GM12878 (cell line): ENCODE measurements at regions of chr3 and their contacts with region 1.

Region 1: GRCh38 chr3:111967651-111968274 is 11.1 kb upstream of the ABHD10 start:
- DNase-seq: no peak
- ATAC-seq: peak; percentile 99
- H3K4me3 ChIP-seq: no peak overlapping the region
- H3K27ac ChIP-seq: no peak overlapping the region
- H3K4me1 ChIP-seq: no peaks in the 10 kb centered on the region
- H3K27me3 ChIP-seq: no peaks in the 10 kb centered on the region
- CTCF ChIP-seq: peak; percentile 78 to 87 (median 85)
- EP300 ChIP-seq: no peak
- POLR2A ChIP-seq: no peak
- RAD21 ChIP-seq: peak; percentile 90

Region 2: GRCh38 chr3:111577794-111578685 is 389.7 kb before region 1 on chr3:
- CTCF ChIA-PET with region 1: interaction called, 10 read pairs
- POLR2A ChIA-PET with region 1: no interaction called
- RAD21 ChIA-PET with region 1: interaction called, 5 read pairs
- SMC1A ChIA-PET with region 1: interaction called, 6 read pairs
- in situ Hi-C with region 1: loop called (anchors 10 kb)
- intact Hi-C with region 1: loop called (anchors 2 kb)
- DNase-seq: peak; percentile 39
- ATAC-seq: peak; percentile 94
- H3K4me3 ChIP-seq: no peak overlapping the region
- H3K27ac ChIP-seq: no peak overlapping the region
- H3K4me1 ChIP-seq: no peaks in the 10 kb centered on the region
- H3K27me3 ChIP-seq: no peaks in the 10 kb centered on the region; a peak in 1 of 4 replicates
- CTCF ChIP-seq: peak; percentile 33 to 58 (median 34); a peak in 5 of 6 replicates
- EP300 ChIP-seq: no peak
- POLR2A ChIP-seq: no peak
- RAD21 ChIP-seq: peak; percentile 58

Region 3: DNA sequence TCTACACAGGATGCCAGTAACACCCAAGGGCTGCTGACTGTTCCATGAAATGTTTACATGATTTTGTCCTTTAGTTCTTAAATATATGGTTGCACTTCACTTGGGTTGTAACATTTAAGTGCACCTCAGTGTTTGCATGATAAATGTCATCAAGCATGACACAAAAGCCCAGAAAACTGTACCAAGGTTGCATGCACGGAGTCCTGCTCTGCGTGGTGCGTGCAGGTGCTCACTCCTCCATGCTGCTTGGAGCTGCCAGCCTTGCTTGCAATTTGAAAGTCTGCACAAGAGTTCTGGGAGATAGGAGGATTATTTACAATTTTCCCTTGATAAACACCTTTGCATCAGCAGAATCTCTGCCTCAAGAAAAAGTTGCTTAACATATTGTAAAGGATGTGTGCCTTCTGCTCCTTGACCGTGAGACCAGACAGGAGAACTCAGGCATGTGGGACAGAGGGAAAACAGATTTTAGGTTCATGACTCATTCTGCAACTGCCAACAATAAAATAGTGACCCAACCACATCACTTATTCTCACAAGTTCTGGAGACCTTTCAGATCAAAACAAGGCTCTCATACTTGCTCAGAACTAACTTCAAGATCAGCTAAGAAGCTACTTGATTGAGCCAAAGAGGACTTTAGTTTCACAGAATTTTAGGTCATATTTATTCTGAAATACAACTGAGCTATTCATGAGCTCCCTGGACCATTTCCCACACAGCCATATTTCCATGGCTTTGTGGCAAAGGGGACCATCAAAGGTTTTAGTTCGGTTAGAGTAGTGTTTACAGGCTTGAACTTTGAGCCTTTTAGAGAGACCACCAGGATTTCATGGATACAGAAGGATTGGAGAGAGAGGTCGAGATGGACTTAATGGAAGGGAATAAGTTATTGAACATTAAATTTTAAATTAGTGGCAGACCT is 244.2 kb before region 1 on chr3:
- CTCF ChIA-PET with region 1: interaction called, 380 read pairs
- POLR2A ChIA-PET with region 1: interaction called, 4 read pairs
- RAD21 ChIA-PET with region 1: interaction called, 177 read pairs
- SMC1A ChIA-PET with region 1: interaction called, 424 read pairs
- in situ Hi-C with region 1: loop called (anchors 5 kb)
- intact Hi-C with region 1: no loop called
- DNase-seq: no peak
- ATAC-seq: peak; percentile 48; the same call in 2 of the 3 replicates
- H3K4me3 ChIP-seq: no peak overlapping the region
- H3K27ac ChIP-seq: no peak overlapping the region
- H3K4me1 ChIP-seq: peaks cover 8% of the 10 kb centered on the region
- H3K27me3 ChIP-seq: no peaks in the 10 kb centered on the region
- CTCF ChIP-seq: no peak
- EP300 ChIP-seq: no peak
- POLR2A ChIP-seq: no peak
- RAD21 ChIP-seq: no peak

Region 4: DNA sequence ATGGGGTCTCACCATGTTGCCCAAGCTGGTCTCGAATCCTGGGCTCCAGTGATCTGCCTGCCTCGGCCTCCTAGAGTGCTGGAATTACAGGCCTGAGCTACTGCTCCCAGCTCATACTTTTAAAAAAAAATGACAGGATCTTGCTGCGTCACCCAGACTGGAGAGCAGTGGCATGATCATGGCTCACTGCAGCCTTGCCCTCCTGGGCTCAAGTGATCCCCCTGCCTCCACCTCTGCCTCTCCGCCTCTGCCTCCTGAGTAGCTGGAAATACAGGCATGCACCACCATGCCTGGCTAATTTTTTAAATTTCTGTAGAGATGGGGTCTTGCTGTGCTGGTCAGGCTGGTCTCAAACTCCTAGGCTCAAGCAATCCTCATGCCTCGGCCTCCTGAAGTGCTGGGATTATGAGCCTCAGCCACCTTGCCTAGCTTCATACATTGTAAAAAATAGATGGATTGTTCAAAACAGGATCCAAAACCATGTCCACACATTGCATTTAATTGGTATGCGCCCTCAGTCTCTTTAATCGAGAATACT is 99.8 kb before region 1 on chr3:
- CTCF ChIA-PET with region 1: interaction called, 29 read pairs
- POLR2A ChIA-PET with region 1: no interaction called
- RAD21 ChIA-PET with region 1: interaction called, 13 read pairs
- SMC1A ChIA-PET with region 1: interaction called, 9 read pairs
- in situ Hi-C with region 1: no loop called
- intact Hi-C with region 1: no loop called
- DNase-seq: no peak
- ATAC-seq: no peak
- H3K4me3 ChIP-seq: no peak overlapping the region
- H3K27ac ChIP-seq: no peak overlapping the region
- H3K4me1 ChIP-seq: no peaks in the 10 kb centered on the region
- H3K27me3 ChIP-seq: peaks cover 0 to 5% of the 10 kb centered on the region in 2 experiments; a peak in 2 of 4 replicates
- CTCF ChIP-seq: no peak
- EP300 ChIP-seq: no peak
- POLR2A ChIP-seq: no peak
- RAD21 ChIP-seq: no peak

Region 5: DNA sequence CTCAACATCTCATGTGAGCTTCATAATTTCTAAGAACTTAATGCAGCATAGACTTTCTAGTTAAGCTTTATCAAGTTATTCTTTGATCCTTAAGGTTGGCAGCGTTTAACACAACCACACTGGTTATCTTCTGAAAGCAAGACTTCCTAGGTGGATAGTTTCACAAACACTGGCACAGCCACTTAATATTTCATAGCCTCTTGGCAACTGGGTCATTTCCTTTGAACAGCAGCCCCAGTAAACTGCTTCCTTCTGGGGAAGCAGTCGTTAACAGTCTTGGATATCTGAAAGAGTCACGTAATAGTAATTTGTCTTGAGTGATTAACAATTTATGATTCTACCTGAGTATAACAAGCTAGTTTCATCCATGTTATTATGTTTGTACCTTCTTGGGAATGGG is 34.8 kb before region 1 on chr3:
- CTCF ChIA-PET with region 1: interaction called, 12 read pairs
- POLR2A ChIA-PET with region 1: no interaction called
- RAD21 ChIA-PET with region 1: no interaction called
- SMC1A ChIA-PET with region 1: interaction called, 4 read pairs
- in situ Hi-C with region 1: no loop called
- intact Hi-C with region 1: no loop called
- DNase-seq: no peak
- ATAC-seq: no peak
- H3K4me3 ChIP-seq: no peak overlapping the region
- H3K27ac ChIP-seq: no peak overlapping the region
- H3K4me1 ChIP-seq: no peaks in the 10 kb centered on the region
- H3K27me3 ChIP-seq: no peaks in the 10 kb centered on the region
- CTCF ChIP-seq: no peak
- EP300 ChIP-seq: no peak
- POLR2A ChIP-seq: no peak
- RAD21 ChIP-seq: no peak

Region 6: GRCh38 chr3:111989061-111989678 is 21.4 kb after region 1 on chr3:
- CTCF ChIA-PET with region 1: interaction called, 21 read pairs
- POLR2A ChIA-PET with region 1: interaction called, 3 read pairs
- RAD21 ChIA-PET with region 1: interaction called, 5 read pairs
- SMC1A ChIA-PET with region 1: interaction called, 12 read pairs
- in situ Hi-C with region 1: no loop called
- intact Hi-C with region 1: no loop called
- DNase-seq: no peak
- ATAC-seq: peak; percentile 96
- H3K4me3 ChIP-seq: no peak overlapping the region
- H3K27ac ChIP-seq: no peak overlapping the region
- H3K4me1 ChIP-seq: no peaks in the 10 kb centered on the region
- H3K27me3 ChIP-seq: no peaks in the 10 kb centered on the region
- CTCF ChIP-seq: peak; percentile 57 to 73 (median 68)
- EP300 ChIP-seq: no peak
- POLR2A ChIP-seq: no peak
- RAD21 ChIP-seq: peak; percentile 65

Region 7: GRCh38 chr3:112136959-112137693 is 169.4 kb after region 1 on chr3:
- CTCF ChIA-PET with region 1: no interaction called
- POLR2A ChIA-PET with region 1: no interaction called
- RAD21 ChIA-PET with region 1: no interaction called
- SMC1A ChIA-PET with region 1: no interaction called
- in situ Hi-C with region 1: no loop called
- intact Hi-C with region 1: no loop called
- DNase-seq: no peak
- ATAC-seq: peak; percentile 42
- H3K4me3 ChIP-seq: no peak overlapping the region
- H3K27ac ChIP-seq: peak overlapping the region; percentile 99
- H3K4me1 ChIP-seq: peaks cover 47% of the 10 kb centered on the region
- H3K27me3 ChIP-seq: no peaks in the 10 kb centered on the region
- CTCF ChIP-seq: peak; percentile 67 to 88 (median 81); a peak in 5 of 6 replicates
- EP300 ChIP-seq: 0 out of 4 replicates have a peak, but pooled peaks of 1 of the 2 experiments have one; percentile 32
- POLR2A ChIP-seq: peak; percentile 67
- RAD21 ChIP-seq: peak; percentile 94

Region 8: GRCh38 chr3:112273536-112273935 is 305.8 kb after region 1 on chr3:
- CTCF ChIA-PET with region 1: no interaction called
- POLR2A ChIA-PET with region 1: no interaction called
- RAD21 ChIA-PET with region 1: no interaction called
- SMC1A ChIA-PET with region 1: no interaction called
- in situ Hi-C with region 1: no loop called
- intact Hi-C with region 1: no loop called
- DNase-seq: no peak
- ATAC-seq: no peak
- H3K4me3 ChIP-seq: no peak overlapping the region
- H3K27ac ChIP-seq: no peak overlapping the region
- H3K4me1 ChIP-seq: no peaks in the 10 kb centered on the region
- H3K27me3 ChIP-seq: no peaks in the 10 kb centered on the region
- CTCF ChIP-seq: no peak
- EP300 ChIP-seq: no peak
- POLR2A ChIP-seq: no peak
- RAD21 ChIP-seq: no peak